Heart left ventricle (tissue), 16 donors: ENCODE measurements at regions of chr2 and their contacts with region 1.

Region 1: DNA sequence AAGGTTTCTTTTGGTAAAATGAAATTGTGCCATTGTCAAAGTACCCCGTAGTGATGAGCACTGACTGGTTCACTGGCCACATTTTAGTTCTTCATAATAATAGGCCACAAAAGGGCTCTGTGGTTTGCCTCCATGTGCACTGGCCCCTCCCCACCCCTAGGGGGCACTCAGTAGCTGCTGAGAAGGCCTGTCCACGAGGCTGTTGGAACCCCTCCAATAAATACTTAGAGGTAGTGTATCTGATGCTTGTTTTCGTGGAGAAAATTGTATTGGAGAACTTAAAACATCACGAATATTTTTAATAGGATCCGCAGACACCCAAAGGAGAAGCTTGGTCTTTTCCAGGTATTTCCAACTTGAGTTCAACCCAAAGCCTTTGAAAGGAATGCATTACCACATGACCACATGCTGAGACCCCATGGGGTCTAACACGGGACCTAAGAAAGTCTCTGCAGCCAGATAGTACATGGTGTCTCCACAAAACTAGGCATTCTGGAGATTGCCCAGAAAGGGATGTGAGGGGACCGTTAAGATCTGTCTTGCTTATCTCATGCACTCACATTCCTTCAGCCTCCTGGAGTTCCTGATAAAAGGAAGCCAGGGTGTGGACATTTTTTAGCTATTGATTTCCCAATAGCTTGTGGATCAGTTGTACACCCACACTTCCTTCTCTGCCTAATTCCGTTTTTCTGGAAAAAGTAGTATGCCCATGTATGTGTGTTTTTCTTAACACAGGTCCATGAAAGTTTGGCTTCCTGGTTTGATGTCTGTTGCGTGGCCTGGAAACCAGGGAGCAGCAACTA is 28.5 kb upstream of the NOSTRIN start:
- DNase-seq: peak; percentile 50 to 76 (median 55)
- ATAC-seq: peak in 3 of 4 donors; percentile 57 to 86 (median 73)
- H3K4me3 ChIP-seq: no peak overlapping the region
- H3K27ac ChIP-seq: no peak overlapping the region
- H3K4me1 ChIP-seq: peaks cover 0 to 16% (median 4%) of the 10 kb centered on the region in 12 donors
- H3K27me3 ChIP-seq: no peaks in the 10 kb centered on the region
- CTCF ChIP-seq: peak; percentile 74 to 95 (median 88)
- POLR2A ChIP-seq: no peak

Region 2: DNA sequence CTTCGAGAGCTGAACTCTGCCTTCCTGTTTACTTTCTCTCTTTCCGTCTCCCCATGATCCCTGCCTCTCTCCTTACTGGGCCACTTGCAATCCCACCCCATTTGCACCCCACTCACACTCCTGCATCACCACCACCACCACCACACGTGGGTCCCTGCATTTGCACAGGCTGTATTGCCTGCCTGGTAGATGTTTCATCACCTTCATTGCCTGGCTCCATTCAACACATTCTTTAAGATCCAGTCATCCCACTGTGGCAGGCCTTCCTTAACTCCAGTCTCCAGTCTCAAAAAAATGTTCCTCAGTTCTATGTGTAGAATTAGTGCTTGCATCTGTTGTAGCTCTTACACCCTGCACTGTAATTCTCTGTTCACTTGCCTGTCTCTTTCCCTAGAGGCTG is 42.4 kb after region 1 on chr2:
- intact Hi-C with region 1: loop called in 2 of 10 experiments (anchors 5 kb)
- DNase-seq: no peak
- ATAC-seq: peak in 1 of 4 donors; percentile 43
- H3K4me3 ChIP-seq: no peak overlapping the region
- H3K27ac ChIP-seq: no peak overlapping the region
- H3K4me1 ChIP-seq: peaks cover 0 to 45% (median 14%) of the 10 kb centered on the region in 12 donors
- H3K27me3 ChIP-seq: no peaks in the 10 kb centered on the region
- CTCF ChIP-seq: no peak
- POLR2A ChIP-seq: no peak

Region 3: GRCh38 chr2:168849610-168850009 is 75.7 kb after region 1 on chr2:
- intact Hi-C with region 1: loop called in 8 of 10 experiments (anchors 1 to 10 kb)
- DNase-seq: peak in 3 of 5 donors; percentile 26 to 50 (median 39)
- ATAC-seq: peak in 3 of 4 donors; percentile 56 to 82 (median 72)
- H3K4me3 ChIP-seq: no peak overlapping the region
- H3K27ac ChIP-seq: no peak overlapping the region
- H3K4me1 ChIP-seq: no peaks in the 10 kb centered on the region
- H3K27me3 ChIP-seq: no peaks in the 10 kb centered on the region
- CTCF ChIP-seq: peak; percentile 21 to 55 (median 34)
- POLR2A ChIP-seq: no peak

Region 4: DNA sequence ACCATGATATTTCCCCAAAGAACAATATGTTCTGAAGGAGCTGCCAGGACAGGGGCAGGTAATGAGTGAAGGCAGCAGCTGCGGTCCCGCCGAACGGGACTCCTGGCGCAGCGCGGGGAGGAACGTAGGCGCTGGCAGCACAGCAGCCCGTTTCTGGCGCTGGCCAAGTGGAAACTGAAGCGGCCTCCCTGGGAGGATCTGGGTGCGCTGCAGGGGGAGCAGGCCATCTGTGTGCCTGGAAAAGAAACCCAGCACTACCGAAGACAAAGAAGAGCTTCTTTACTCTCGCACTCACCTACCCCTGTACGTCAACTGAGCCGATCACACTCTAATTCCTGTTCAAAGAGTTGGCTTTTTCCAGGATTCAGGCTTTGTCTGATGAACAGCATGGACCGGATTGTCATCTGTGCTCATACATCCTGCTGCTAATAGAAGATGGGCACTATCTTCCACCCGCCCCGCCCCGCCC is 139.0 kb after region 1 on chr2:
- intact Hi-C with region 1: loop called in 1 of 10 experiments (anchors 2 kb)
- DNase-seq: peak; percentile 9 to 65 (median 36)
- ATAC-seq: peak; percentile 42 to 74 (median 72)
- H3K4me3 ChIP-seq: peak overlapping the region in 6 of 12 donors; percentile 1 to 32 (median 18)
- H3K27ac ChIP-seq: no peak overlapping the region
- H3K4me1 ChIP-seq: peaks cover 0 to 7% (median 0%) of the 10 kb centered on the region in 12 donors
- H3K27me3 ChIP-seq: peaks cover 0 to 6% (median 0%) of the 10 kb centered on the region in 9 donors
- CTCF ChIP-seq: no peak
- POLR2A ChIP-seq: no peak

Region 5: GRCh38 chr2:168920504-168921157 is 146.7 kb after region 1 on chr2:
- intact Hi-C with region 1: loop called (anchors 2 to 5 kb)
- DNase-seq: no peak
- ATAC-seq: no peak
- H3K4me3 ChIP-seq: no peak overlapping the region
- H3K27ac ChIP-seq: no peak overlapping the region
- H3K4me1 ChIP-seq: no peaks in the 10 kb centered on the region
- H3K27me3 ChIP-seq: peaks cover 0 to under 1% (median 0%) of the 10 kb centered on the region in 9 donors
- CTCF ChIP-seq: peak; percentile 44 to 73 (median 67)
- POLR2A ChIP-seq: no peak

Region 6: DNA sequence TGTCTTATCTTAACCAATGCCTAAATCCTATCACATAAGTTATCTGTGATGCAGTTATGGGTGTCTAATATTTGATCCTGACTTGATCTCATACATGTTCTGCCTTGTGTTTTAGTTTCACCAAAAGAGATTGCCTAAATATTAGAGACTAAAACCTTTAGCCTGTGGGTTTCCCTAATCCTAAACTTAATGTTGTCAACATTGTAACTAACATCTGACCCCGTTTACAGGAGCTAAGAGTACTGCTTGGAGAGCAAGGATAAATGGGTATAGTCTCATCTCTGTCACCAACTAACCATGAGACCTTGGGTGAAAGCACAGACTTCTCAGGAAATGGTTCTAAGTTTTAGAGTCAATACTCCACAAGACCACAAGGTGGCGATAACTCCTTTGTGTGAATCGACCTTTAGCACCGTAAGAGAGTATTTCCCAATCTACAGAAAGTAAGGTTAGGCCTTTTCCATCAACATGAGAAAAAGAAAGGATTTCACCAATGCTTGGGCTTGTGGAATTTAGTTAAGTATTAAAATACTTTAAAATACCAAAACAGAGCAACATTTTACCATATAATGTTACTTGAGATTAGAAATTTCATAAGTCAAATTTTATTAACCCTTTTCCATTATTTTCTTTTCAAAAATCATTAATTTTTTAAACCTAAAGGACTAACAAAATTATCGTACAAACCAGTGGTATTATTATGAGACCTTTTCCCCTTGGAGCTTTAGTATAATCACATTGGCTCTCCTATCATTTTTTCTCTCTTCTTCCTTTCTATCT is 187.7 kb after region 1 on chr2:
- intact Hi-C with region 1: no loop called
- DNase-seq: peak in 2 of 5 donors; percentile 15 to 21
- ATAC-seq: peak; percentile 62 to 88 (median 78)
- H3K4me3 ChIP-seq: no peak overlapping the region
- H3K27ac ChIP-seq: no peak overlapping the region
- H3K4me1 ChIP-seq: peaks cover 0 to 10% (median 0%) of the 10 kb centered on the region in 12 donors
- H3K27me3 ChIP-seq: no peaks in the 10 kb centered on the region
- CTCF ChIP-seq: peak; percentile 72 to 86 (median 80)
- POLR2A ChIP-seq: no peak